Prostate gland (tissue), 2 donors: ENCODE measurements at regions of chr13 and their contacts with region 1.

Region 1: DNA sequence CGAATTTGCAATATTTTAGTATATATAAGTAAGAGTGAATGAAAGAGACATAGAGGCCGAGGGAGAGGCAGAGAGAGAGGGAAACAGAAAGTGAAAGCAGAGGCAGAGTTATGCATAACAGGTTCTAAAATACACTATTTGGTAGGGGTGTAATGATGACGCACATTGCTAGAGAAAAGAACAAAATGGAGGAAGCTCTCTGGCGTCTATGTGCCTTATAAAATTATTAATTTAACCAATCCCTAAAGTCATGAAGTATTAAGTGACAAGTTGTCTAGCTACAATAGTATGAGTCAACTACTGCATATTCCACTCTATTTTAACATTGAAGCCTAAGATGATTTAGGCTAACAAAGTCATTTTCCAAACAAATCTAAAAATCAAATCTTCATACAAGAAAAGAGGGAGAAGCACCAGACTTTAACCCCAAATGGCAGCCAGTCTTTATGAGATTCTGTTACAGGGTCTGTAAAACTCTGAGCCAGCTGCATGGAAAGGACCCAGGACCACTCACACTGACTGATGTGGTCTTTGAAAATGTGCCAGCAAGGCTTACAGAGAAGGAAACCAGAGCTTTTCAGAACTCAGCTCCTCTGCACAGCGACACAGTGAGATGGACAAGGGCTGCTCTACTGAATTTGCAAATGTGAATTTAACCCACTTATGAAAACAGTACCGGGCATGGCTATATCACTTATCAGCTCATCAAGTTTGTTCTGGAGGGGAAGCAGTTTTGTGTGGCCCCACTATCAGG is 99.0 kb upstream of the SERP2 start:
- DNase-seq: peak; percentile 66
- H3K4me3 ChIP-seq: no peak overlapping the region
- H3K27ac ChIP-seq: peak overlapping the region; percentile 85 to 87
- H3K4me1 ChIP-seq: peaks cover 13% of the 10 kb centered on the region
- H3K27me3 ChIP-seq: no peaks in the 10 kb centered on the region
- CTCF ChIP-seq: no peak
- POLR2A ChIP-seq: no peak

Region 2: GRCh38 chr13:44312898-44313551 is 38.4 kb after region 1 on chr13:
- intact Hi-C with region 1: loop called (anchors 5 kb)
- DNase-seq: peak; percentile 52
- H3K4me3 ChIP-seq: no peak overlapping the region
- H3K27ac ChIP-seq: peak overlapping the region; percentile 36 to 55
- H3K4me1 ChIP-seq: peaks cover 13% of the 10 kb centered on the region
- H3K27me3 ChIP-seq: no peaks in the 10 kb centered on the region
- CTCF ChIP-seq: no peak
- POLR2A ChIP-seq: no peak

Region 3: DNA sequence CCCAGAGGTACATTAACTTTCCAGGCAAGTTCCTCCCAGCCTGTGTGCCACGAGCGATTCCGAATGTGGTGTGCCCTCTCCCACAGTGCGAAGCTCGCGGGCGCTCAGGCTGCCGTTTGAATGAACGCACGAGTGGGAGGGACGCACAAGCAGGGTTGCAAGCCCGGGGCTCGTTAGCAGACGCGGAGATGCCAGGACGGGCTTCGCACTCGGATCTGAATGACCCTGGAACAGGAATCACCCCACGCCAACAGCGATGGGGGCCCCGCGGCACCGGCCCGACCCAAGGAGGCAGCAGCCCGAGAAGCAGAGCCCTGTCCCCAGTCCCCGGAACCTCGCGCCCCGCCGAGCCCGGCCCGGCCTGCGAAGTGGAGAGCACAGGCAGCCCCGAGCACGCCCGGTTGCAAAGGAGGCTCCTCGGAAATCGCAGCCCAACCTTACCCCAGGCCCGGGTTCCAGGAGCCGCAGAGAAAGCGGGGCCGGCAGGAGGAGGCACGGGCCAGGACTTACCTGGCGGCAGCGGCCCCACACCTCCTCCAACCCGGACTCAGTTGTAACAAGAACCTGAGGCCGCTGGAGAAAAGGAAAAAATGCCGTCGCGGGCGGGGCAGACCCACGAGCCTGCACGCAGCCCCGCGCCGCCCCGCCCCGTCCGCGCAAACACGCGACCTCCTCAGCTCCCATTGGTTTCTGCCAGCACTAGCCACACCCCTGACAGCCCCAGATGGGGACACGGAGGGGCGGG is 1143.3 kb after region 1 on chr13 and contains the start of gene SLC25A30:
- intact Hi-C with region 1: no loop called
- DNase-seq: peak; percentile 97
- H3K4me3 ChIP-seq: peak within 1 kb of the TSS; percentile 67 to 81
- H3K27ac ChIP-seq: peak within 1 kb of the TSS; percentile 89 to 90
- H3K4me1 ChIP-seq: peaks cover 8% of the 10 kb centered on the region
- H3K27me3 ChIP-seq: no peaks in the 10 kb centered on the region
- CTCF ChIP-seq: no peak
- POLR2A ChIP-seq: peak; percentile 80
- total RNA-seq, gene SLC25A30: 12.6 to 14.2 TPM